Psoas muscle (tissue), 8 donors: ENCODE measurements at regions of chr15 and their contacts with region 1.

Region 1: GRCh38 chr15:63599401-63600000 is 2.3 kb downstream of the FBXL22 start:
- DNase-seq: peak; percentile 66 to 85
- ATAC-seq: peak; percentile 50 to 73 (median 58)
- H3K4me3 ChIP-seq: peak overlapping the region; percentile 90
- H3K27ac ChIP-seq: peak overlapping the region; percentile 90
- H3K4me1 ChIP-seq: peaks cover 50% of the 10 kb centered on the region
- H3K27me3 ChIP-seq: no peaks in the 10 kb centered on the region
- CTCF ChIP-seq: peak; percentile 67

Region 2: DNA sequence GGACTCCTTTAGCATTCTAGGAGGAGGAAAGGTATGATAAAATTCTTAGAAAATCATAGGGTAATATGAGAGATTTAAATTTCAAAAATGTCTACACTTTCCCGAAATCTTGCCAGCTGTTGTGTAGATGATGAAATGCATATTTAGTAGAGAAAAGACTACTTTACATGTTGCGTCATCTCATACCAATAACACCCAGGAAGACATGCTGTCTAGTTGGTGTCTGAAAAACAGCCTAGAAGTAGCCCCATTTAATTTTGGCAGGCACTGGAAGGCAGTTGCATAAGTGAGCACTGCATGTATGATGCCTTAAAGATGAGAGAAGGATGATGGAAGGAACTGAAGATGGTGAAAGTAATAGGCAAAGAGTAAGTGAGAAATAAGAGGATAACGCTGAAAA is 867.4 kb before region 1 on chr15:
- intact Hi-C with region 1: no loop called
- DNase-seq: no peak
- ATAC-seq: no peak
- H3K4me3 ChIP-seq: no peak overlapping the region
- H3K27ac ChIP-seq: no peak overlapping the region
- H3K4me1 ChIP-seq: no peaks in the 10 kb centered on the region
- H3K27me3 ChIP-seq: no peaks in the 10 kb centered on the region
- CTCF ChIP-seq: no peak

Region 3: GRCh38 chr15:63466378-63467192 is 132.9 kb before region 1 on chr15:
- intact Hi-C with region 1: loop called (anchors 1 to 5 kb)
- DNase-seq: no peak
- ATAC-seq: peak; percentile 78 to 92 (median 86)
- H3K4me3 ChIP-seq: no peak overlapping the region
- H3K27ac ChIP-seq: no peak overlapping the region
- H3K4me1 ChIP-seq: no peaks in the 10 kb centered on the region
- H3K27me3 ChIP-seq: no peaks in the 10 kb centered on the region
- CTCF ChIP-seq: peak; percentile 59

Region 4: DNA sequence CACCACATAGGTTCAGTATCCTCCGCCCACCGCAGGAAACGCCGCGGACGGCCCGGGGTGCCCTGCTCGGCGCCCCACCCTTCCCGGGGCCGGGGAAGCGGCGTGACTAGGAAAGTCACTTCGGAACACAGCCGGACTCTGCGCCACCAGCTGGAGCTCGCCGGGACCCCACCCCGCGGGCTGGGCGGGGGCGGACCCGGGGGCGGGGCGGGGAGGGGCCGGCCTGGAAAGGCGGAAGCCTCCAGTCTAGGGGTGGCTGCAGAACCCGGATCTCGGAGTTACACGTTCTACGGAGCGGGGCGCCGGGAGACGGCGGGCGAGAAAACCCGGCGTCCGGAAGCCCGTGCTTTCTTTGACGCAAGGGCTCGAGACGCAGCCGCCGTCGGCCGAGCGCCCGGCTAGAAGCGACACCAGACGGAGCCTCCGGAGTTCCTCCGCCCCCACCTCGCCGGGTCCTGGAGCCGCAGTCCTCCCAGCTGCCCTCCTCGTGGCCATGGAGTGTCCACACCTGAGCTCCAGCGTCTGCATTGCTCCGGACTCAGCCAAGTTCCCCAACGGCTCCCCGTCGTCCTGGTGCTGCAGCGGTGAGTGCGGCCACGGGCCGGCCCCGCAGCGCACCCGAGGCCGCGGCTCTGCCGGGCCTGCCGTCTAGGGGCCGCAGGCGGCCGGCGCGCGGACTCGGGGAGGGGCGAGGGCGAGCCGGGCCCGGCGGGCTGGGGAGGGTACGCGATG is 95.1 kb before region 1 on chr15 and contains the start of gene USP3:
- intact Hi-C with region 1: loop called (anchors 5 kb)
- DNase-seq: peak; percentile 95 to 97
- ATAC-seq: peak; percentile 90 to 94 (median 92)
- H3K4me3 ChIP-seq: peak within 1 kb of the TSS; percentile 82
- H3K27ac ChIP-seq: peak within 1 kb of the TSS; percentile 94
- H3K4me1 ChIP-seq: peaks cover 49% of the 10 kb centered on the region
- H3K27me3 ChIP-seq: no peaks in the 10 kb centered on the region
- CTCF ChIP-seq: peak; percentile 40
- total RNA-seq, gene USP3: 9.4 to 13.6 (median 12.1) TPM

Region 5: GRCh38 chr15:63573533-63573932 is 26.0 kb before region 1 on chr15:
- intact Hi-C with region 1: no loop called
- DNase-seq: no peak
- ATAC-seq: no peak
- H3K4me3 ChIP-seq: no peak overlapping the region
- H3K27ac ChIP-seq: no peak overlapping the region
- H3K4me1 ChIP-seq: no peaks in the 10 kb centered on the region
- H3K27me3 ChIP-seq: no peaks in the 10 kb centered on the region
- CTCF ChIP-seq: no peak

Region 6: GRCh38 chr15:63638839-63639238 is 39.3 kb after region 1 on chr15:
- intact Hi-C with region 1: no loop called
- DNase-seq: no peak
- ATAC-seq: no peak
- H3K4me3 ChIP-seq: no peak overlapping the region
- H3K27ac ChIP-seq: no peak overlapping the region
- H3K4me1 ChIP-seq: no peaks in the 10 kb centered on the region
- H3K27me3 ChIP-seq: no peaks in the 10 kb centered on the region
- CTCF ChIP-seq: no peak

Region 7: DNA sequence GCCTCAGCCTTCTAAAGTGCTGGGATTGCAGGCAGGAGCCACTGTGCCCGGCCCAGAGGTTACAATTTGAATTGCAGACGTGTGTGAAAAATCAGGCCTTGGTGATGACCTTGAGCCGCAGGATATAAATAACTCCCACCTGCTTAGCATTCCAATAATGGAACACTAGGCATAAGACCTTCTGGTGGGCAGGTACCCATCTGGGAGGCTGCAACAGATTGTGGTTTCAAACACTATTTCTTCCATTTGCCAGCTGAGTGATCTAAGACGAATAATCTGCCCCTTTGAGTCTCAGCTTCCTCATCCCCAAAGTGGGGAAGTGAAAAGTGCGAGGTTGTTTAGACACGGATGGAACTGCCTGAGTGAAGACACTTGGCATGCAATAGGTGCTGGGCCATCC is 281.9 kb after region 1 on chr15:
- intact Hi-C with region 1: no loop called
- DNase-seq: no peak
- ATAC-seq: peak in 3 of 4 donors; percentile 31 to 51 (median 35)
- H3K4me3 ChIP-seq: no peak overlapping the region
- H3K27ac ChIP-seq: peak overlapping the region; percentile 50
- H3K4me1 ChIP-seq: peaks cover 27% of the 10 kb centered on the region
- H3K27me3 ChIP-seq: no peaks in the 10 kb centered on the region
- CTCF ChIP-seq: no peak